ENCODE measurements at regions of chr19 and their contacts with region 1.

Region 1: DNA sequence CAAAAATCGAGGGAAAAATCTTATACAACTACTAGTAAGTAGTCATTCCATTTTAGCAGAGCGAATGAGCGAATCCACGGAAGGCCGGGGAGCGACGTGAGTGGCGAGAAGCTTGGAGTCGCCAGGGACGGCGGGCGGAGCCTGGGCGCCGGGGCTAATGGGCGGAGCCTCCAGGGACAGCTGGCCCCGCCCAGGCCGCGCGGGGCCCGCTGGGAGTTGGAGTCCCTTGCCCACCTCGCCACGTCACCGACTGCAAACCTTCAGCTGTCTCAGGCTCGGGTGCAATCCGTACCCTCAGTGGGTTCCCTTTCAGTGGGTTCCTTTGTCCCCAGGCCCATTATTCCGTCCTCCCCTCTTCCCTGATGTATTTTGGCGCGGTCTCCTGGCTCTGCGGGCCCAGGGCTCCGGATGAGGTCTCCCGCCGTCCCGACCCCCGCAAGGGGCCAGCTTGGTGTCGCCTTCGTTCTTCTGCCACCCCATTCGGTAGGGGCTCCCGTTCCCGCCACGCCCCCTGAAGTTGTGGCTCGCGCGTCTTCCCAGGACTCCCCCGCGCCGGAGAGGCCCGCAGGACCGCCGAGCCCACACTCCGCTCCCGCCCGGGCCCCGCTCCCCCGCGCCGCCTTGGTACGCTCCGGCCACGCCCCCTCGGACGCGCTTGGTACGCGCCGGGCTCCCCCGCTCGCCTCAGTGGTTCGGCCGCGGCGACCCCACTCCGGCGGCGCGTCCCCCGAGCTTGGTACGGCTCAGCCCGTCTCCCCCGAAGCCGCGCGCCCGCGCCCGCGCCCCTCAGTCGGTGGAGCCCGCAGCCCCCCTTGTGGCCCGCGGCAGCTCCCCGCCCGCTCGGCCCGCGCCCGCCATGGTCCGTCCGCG is at the start of gene PTOV1:
- H3K4me3 ChIP-seq: peak within 1 kb of the TSS; percentile 76
- H3K27ac ChIP-seq: peak within 1 kb of the TSS; percentile 99
- H3K4me1 ChIP-seq: peaks cover 17% of the 10 kb centered on the region; the same call in 1 of the 2 replicates
- CTCF ChIP-seq: no peak

Region 2: GRCh38 chr19:49718511-49718910 is 132.2 kb before region 1 on chr19:
- CTCF ChIA-PET with region 1: interaction called, 13 read pairs
- POLR2A ChIA-PET with region 1: no interaction called
- H3K4me3 ChIP-seq: no peak overlapping the region
- H3K27ac ChIP-seq: no peak overlapping the region
- H3K4me1 ChIP-seq: no peaks in the 10 kb centered on the region
- CTCF ChIP-seq: no peak

Region 3: DNA sequence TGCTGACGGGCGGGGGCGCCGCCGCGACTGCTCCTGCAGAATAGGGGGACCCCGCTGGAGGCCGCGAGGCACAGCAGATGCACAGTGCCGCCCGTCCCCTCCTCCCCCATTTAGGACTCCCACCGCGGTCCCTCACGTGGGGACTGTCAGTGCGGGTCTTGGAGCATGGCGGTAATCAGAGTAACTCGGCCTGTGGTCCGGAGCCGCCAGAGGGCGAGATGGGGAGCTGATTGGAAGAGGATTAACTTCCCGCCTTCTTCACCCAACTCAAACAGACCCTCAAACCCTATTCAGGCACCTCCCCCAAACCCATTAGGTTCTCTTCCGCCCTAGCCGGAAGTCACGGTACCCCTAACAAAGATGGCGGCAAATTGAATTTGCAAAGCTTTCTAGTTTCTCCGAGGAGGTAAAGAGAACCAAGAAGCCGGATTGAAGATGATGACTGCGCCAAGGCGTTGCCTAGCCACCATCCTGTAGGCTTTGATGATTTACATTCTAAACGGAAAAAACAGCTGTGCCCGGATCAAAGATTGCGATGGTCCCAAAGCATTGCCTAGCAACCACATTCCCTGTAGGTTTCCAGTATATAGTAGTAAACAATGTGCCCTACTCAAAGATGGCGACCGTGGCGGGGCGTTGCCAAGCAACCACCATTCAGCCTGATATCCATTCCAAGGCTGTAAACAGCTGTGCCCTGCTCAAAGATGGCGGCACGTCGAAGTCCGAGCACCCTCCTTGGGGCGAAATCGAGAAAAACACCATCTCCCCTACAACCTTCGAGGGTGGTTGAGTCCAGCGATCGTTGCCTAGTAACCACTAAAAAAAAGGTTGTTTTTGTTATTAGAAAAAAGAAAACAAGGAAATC is 37.5 kb before region 1 on chr19 and contains the start of gene FUZ:
- CTCF ChIA-PET with region 1: interaction called, 7 read pairs
- POLR2A ChIA-PET with region 1: interaction called, 23 read pairs
- H3K4me3 ChIP-seq: peak within 1 kb of the TSS; percentile 92
- H3K27ac ChIP-seq: peak within 1 kb of the TSS; percentile 67; the same call in 1 of the 2 replicates
- H3K4me1 ChIP-seq: peaks cover 2% of the 10 kb centered on the region; the same call in 1 of the 2 replicates
- CTCF ChIP-seq: peak; percentile 91

Region 4: DNA sequence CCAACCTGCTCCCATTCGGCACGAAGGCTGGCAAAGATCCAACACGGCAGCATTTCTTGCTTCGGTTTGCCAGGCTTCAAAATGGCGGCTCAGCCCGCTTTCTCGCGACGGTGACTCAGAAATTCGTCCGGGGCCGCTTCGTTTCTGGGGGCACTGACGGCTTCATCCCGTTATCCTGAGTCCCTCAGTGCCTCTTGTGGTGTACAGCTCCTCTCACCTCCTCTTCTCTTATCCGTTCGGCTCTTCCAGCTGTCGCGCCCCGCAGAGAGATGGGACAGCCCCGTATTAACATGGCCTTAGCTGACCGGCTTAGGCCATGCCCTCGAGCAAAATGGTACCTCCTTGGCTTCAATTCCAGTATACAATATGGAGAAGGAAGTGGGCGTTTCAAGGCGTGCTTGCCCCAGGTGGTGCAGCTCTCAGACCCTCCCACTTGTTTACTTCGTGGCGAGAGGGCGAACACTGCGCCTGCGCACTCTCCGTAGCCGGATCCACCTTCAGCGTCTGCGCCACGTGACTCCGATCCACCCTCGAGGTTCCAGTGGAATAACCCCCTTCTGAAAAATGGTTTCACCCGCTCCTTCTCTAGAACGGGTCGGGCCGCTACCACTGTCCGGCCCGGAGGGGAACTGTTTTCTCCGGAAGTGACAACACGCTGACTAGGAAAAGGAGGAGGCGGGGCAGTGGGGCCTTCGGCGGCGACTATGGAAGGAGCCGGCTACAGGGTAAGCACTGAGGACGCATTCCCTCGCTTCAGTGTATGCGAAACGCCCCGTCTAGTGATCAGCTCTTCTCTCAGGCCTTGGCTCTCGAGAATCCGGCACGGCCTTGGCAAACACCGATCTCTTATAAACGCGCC is 26.5 kb after region 1 on chr19 and contains the starts of genes AKT1S1 and TBC1D17:
- CTCF ChIA-PET with region 1: no interaction called
- POLR2A ChIA-PET with region 1: interaction called, 10 read pairs
- H3K4me3 ChIP-seq: peak within 1 kb of the TSS; percentile 79
- H3K27ac ChIP-seq: peak within 1 kb of the TSS; percentile 94
- H3K4me1 ChIP-seq: peaks cover 9% of the 10 kb centered on the region
- CTCF ChIP-seq: no peak

Measured in HEK293 (cell line).